ENCODE measurements at regions of chr18 and their contacts with region 1.

Region 1: GRCh38 chr18:3012964-3013804 is at the start of gene LPIN2:
- DNase-seq: peak; percentile 99 to 100 (median 100)
- ATAC-seq: peak; percentile 86 to 89
- H3K4me3 ChIP-seq: peak within 1 kb of the TSS; percentile 79
- H3K27ac ChIP-seq: peak within 1 kb of the TSS; percentile 84
- H3K4me1 ChIP-seq: peaks cover 6% of the 10 kb centered on the region
- H3K27me3 ChIP-seq: no peaks in the 10 kb centered on the region
- total RNA-seq, gene LPIN2: 12.6 to 18.1 (median 14.2) TPM

Region 2: DNA sequence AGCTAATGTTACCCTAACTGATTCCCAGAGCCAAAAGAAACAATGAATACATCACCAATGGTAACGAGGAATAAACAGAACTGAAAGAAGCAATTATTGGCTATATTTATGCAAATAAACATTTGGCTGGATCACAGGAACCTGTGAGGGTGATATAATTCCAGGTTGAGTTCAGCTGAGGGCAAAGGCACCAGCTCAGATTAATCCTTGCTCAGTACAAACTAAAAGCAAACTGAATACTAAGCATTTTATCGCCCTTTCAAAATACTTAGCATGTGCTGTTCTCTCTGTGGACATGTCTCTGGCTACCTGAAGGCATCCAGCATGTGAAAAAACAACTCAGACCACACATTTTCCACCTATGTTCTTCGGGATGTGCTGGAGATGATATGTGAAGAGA is 1233.6 kb before region 1 on chr18:
- intact Hi-C with region 1: no loop called
- DNase-seq: no peak
- ATAC-seq: no peak
- H3K4me3 ChIP-seq: no peak overlapping the region
- H3K27ac ChIP-seq: no peak overlapping the region
- H3K4me1 ChIP-seq: no peaks in the 10 kb centered on the region
- H3K27me3 ChIP-seq: no peaks in the 10 kb centered on the region

Region 3: DNA sequence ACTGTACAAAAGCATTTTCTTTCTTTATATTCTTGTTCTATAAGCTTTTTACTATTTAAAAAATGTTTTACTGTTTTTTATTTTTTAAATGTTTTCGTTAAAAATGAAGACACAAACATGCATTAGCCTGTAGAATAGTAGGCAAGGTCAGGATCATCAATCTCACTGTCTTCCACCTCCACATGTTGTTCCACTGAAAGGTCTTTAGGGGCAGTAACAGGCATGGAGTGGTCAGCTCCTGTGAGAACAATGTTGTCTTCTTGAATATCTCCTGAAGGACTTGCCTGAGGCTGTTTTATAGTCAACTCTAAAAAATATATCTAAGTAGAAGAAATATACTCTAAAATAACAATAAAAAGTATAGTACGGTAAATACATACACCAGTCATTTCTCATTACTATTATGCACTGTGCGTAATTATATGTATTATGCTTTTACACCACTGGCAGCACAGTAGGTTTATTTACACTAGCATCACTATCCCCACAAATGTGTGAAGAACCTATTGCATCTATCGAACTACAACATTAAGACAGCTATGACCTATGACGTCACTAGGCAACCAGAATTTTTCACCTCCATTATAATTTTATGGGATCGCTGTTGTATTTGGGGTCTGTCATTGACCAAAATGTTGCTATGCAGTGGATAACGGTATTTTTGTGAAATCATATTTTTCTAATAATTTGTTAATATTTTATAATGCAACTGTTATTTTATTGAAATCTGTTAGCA is 1206.1 kb before region 1 on chr18:
- intact Hi-C with region 1: no loop called
- DNase-seq: no peak
- ATAC-seq: no peak
- H3K4me3 ChIP-seq: no peak overlapping the region
- H3K27ac ChIP-seq: no peak overlapping the region
- H3K4me1 ChIP-seq: no peaks in the 10 kb centered on the region
- H3K27me3 ChIP-seq: no peaks in the 10 kb centered on the region

Region 4: GRCh38 chr18:2672410-2672809 is 340.8 kb before region 1 on chr18:
- intact Hi-C with region 1: no loop called
- DNase-seq: no peak
- ATAC-seq: no peak
- H3K4me3 ChIP-seq: no peak overlapping the region
- H3K27ac ChIP-seq: no peak overlapping the region
- H3K4me1 ChIP-seq: no peaks in the 10 kb centered on the region
- H3K27me3 ChIP-seq: no peaks in the 10 kb centered on the region

Region 5: DNA sequence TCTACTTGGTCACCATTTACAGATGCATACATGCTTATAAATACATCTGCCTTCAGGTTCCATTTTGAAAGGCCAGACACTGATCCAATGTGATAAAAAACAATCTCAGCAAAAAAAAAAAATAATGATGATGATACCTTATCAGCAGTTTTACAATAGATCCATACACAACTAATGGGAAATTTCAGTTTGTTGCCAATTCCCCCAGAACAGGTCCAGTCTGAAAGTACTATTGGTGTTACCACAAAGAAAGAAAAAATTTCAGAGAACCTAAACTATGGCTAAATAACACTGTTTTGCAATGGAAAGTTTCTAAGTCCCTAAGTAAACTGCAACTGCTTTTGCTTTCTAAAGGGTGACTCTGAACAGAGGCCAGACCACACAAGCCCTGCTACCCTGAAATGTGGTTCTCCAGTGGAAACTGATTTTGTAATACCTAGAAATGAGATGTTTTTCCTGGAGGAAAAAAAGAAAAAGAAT is 54.3 kb before region 1 on chr18:
- intact Hi-C with region 1: loop called in 1 of 4 experiments (anchors 10 kb)
- DNase-seq: peak in 1 of 3 donors; percentile 25
- ATAC-seq: peak; percentile 77 to 78
- H3K4me3 ChIP-seq: no peak overlapping the region
- H3K27ac ChIP-seq: no peak overlapping the region
- H3K4me1 ChIP-seq: peaks cover 8% of the 10 kb centered on the region
- H3K27me3 ChIP-seq: no peaks in the 10 kb centered on the region

Measured in right cardiac atrium (tissue), 5 donors.